ENCODE measurements at regions of chr1 and their contacts with region 1.

Region 1: DNA sequence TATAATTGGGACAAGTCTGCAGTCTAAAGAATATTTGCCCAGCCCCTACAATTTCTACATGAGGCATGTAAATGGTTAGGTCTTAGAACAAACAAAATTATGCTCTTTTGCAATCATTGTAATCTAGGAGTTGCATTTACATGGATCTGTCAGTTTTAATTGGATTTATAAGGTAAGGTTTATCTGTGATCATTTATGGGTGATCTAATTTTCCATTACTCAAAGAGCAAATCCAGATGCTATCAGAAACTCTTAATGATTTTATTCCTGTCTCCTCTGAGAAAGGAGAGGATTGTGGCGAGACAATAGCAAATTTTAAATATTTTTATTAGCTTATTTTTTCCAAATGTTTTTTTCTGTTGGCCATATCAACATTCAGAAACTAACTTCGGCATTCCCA is 14.1 kb upstream of the NEGR1 start:
- DNase-seq: no peak
- ATAC-seq: no peak
- H3K4me3 ChIP-seq: no peak overlapping the region
- H3K4me3 Mint-ChIP-seq: no peak overlapping the region
- H3K27ac ChIP-seq: no peak overlapping the region
- H3K27ac Mint-ChIP-seq: no peak overlapping the region
- H3K4me1 ChIP-seq: no peaks in the 10 kb centered on the region
- H3K4me1 Mint-ChIP-seq: no peaks in the 10 kb centered on the region
- H3K27me3 ChIP-seq: no peaks in the 10 kb centered on the region
- H3K27me3 Mint-ChIP-seq: peaks cover 0 to 7% (median 0%) of the 10 kb centered on the region in 5 donors

Region 2: DNA sequence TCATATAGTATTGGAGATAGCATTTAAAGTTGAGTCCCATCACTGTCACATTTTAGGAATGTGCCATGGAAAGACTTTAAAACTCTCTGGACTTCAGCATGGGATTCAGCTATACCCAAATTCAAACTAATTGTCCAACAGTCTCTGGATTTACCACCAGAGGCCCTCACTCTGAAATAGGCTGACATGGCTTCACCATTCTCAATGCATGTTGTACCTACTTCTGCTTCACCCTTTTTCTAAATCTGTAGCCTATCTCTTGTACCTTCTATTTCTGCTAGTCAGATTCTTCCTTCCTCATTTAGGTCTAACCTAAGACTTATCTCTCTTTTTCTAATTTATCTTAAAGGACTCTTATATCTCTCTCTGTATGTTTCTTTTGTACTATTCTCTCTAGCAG is 703.0 kb before region 1 on chr1:
- CTCF ChIA-PET with region 1: no interaction called
- POLR2A ChIA-PET with region 1: no interaction called
- intact Hi-C with region 1: no loop called
- DNase-seq: no peak
- ATAC-seq: no peak
- H3K4me3 ChIP-seq: no peak overlapping the region
- H3K4me3 Mint-ChIP-seq: no peak overlapping the region
- H3K27ac ChIP-seq: no peak overlapping the region
- H3K27ac Mint-ChIP-seq: no peak overlapping the region
- H3K4me1 ChIP-seq: no peaks in the 10 kb centered on the region
- H3K4me1 Mint-ChIP-seq: no peaks in the 10 kb centered on the region
- H3K27me3 ChIP-seq: no peaks in the 10 kb centered on the region
- H3K27me3 Mint-ChIP-seq: no peaks in the 10 kb centered on the region

Region 3: GRCh38 chr1:72282271-72283021 is 14.0 kb before region 1 on chr1 and contains the start of gene NEGR1:
- CTCF ChIA-PET with region 1: no interaction called
- POLR2A ChIA-PET with region 1: no interaction called
- intact Hi-C with region 1: loop called in 1 of 2 experiments (anchors 2 kb)
- DNase-seq: peak; percentile 31 to 68 (median 55)
- ATAC-seq: peak; percentile 80
- H3K4me3 ChIP-seq: peak within 1 kb of the TSS; percentile 71
- H3K4me3 Mint-ChIP-seq: peak within 1 kb of the TSS in 4 of 10 donors; percentile 65 to 86 (median 82)
- H3K27ac ChIP-seq: peak within 1 kb of the TSS; percentile 53
- H3K27ac Mint-ChIP-seq: peak within 1 kb of the TSS in 7 of 9 donors; percentile 43 to 85 (median 68)
- H3K4me1 ChIP-seq: peaks cover 0 to 3% of the 10 kb centered on the region in 2 donors
- H3K4me1 Mint-ChIP-seq: peaks cover 12 to 35% (median 18%) of the 10 kb centered on the region in 7 donors
- H3K27me3 ChIP-seq: no peaks in the 10 kb centered on the region
- H3K27me3 Mint-ChIP-seq: peaks cover 0 to 35% (median 11%) of the 10 kb centered on the region in 5 donors
- total RNA-seq, gene NEGR1: 0.08 to 1.2 TPM in 2 of 5 experiments, not detected in the others

Measured in naive thymus-derived CD4-positive, alpha-beta T cell (primary cell).